Panc1 (cell line): ENCODE measurements at regions of chr19 and their contacts with region 1.

Region 1: DNA sequence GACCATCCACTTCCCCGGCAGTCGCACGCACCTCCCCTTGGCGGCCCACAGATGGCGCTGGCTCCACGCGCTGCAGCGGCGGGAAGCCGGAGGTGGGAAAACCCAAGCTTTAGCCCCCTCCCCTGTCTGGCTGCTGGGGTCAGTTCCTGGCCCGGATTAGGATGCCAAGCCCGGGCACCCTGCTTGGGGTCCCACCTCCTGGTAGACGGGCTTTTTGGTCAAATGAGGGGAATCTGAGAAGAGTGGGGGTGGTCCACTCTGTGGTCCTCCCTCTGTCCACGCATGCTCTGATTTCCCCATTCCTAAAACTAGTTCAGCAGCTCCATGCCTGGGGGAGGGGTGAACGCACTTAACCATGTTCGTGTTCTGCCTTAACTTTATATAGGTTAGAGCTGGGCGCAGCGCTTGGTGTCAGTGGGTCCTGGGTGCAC is 8.1 kb upstream of the ADGRE2 start:
- DNase-seq: no peak
- ATAC-seq: peak; percentile 79
- H3K4me3 ChIP-seq: 0 out of 4 replicates have a peak overlapping the region, but pooled peaks have one; percentile 4 to 6
- H3K27ac ChIP-seq: no peak overlapping the region
- H3K4me1 ChIP-seq: no peaks in the 10 kb centered on the region
- H3K27me3 ChIP-seq: no peaks in the 10 kb centered on the region
- CTCF ChIP-seq: peak; percentile 94

Region 2: GRCh38 chr19:14761612-14762011 is 24.8 kb before region 1 on chr19:
- CTCF ChIA-PET with region 1: no interaction called
- POLR2A ChIA-PET with region 1: no interaction called
- in situ Hi-C with region 1: no loop called
- intact Hi-C with region 1: no loop called
- DNase-seq: no peak
- ATAC-seq: no peak
- H3K4me3 ChIP-seq: no peak overlapping the region
- H3K27ac ChIP-seq: no peak overlapping the region
- H3K4me1 ChIP-seq: no peaks in the 10 kb centered on the region
- H3K27me3 ChIP-seq: no peaks in the 10 kb centered on the region; the same call in 1 of the 2 replicates
- CTCF ChIP-seq: no peak

Region 3: DNA sequence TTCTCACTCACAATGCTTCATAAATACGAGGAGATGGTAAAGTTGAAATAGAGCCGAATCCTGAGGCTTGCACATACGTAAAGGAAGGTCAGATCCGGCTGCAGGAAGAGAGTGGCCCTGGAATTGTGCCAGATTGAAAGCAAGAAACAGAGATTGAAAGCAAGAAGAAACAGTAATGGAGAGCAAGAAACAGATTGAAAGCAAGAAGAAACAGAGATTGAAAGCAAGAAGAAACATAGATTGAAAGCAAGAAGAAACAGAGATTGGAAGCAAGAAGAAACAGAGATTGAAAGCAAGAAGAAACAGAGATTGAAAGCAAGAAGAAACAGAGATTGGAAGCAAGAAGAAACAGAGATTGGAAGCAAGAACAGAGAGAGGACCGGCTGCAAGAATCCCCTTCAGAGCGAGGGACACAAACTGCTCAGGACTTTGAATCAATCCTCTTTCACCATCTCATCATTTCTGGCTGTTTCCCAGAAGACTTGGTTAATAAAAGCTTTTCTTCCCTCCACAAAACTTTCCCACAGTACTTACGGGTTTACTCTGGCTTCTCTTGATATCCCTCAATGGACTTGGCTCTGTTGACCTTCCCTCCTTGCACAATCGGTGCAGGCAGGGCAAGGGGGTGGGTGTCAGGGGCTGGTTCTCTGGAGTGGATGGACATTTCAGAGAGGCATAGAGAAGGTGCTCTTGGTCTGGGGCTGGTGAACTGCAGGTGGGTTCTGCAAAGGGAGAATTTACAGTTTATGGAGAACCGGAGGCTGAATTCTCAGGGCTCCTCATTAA is 23.0 kb after region 1 on chr19:
- CTCF ChIA-PET with region 1: no interaction called
- POLR2A ChIA-PET with region 1: no interaction called
- in situ Hi-C with region 1: no loop called
- intact Hi-C with region 1: no loop called
- DNase-seq: no peak
- ATAC-seq: no peak
- H3K4me3 ChIP-seq: no peak overlapping the region
- H3K27ac ChIP-seq: no peak overlapping the region
- H3K4me1 ChIP-seq: no peaks in the 10 kb centered on the region
- H3K27me3 ChIP-seq: no peaks in the 10 kb centered on the region
- CTCF ChIP-seq: no peak

Region 4: GRCh38 chr19:14835041-14835453 is 48.6 kb after region 1 on chr19 and contains the starts of genes OR7A5 and OR7C1:
- CTCF ChIA-PET with region 1: no interaction called
- POLR2A ChIA-PET with region 1: no interaction called
- in situ Hi-C with region 1: no loop called
- intact Hi-C with region 1: no loop called
- DNase-seq: no peak
- ATAC-seq: no peak
- H3K4me3 ChIP-seq: no peak within 1 kb of the TSS
- H3K27ac ChIP-seq: no peak within 1 kb of the TSS
- H3K4me1 ChIP-seq: no peaks in the 10 kb centered on the region
- H3K27me3 ChIP-seq: peaks cover 2% of the 10 kb centered on the region; the same call in 1 of the 2 replicates
- CTCF ChIP-seq: no peak
- total RNA-seq, gene OR7A5: not detected
- total RNA-seq, gene OR7C1: not detected

Region 5: GRCh38 chr19:14889994-14890642 is 103.7 kb after region 1 on chr19:
- CTCF ChIA-PET with region 1: no interaction called
- POLR2A ChIA-PET with region 1: no interaction called
- in situ Hi-C with region 1: no loop called
- intact Hi-C with region 1: loop called (anchors 5 kb)
- DNase-seq: no peak
- ATAC-seq: no peak
- H3K4me3 ChIP-seq: no peak overlapping the region
- H3K27ac ChIP-seq: no peak overlapping the region
- H3K4me1 ChIP-seq: no peaks in the 10 kb centered on the region
- H3K27me3 ChIP-seq: no peaks in the 10 kb centered on the region; the same call in 1 of the 2 replicates
- CTCF ChIP-seq: no peak

Region 6: DNA sequence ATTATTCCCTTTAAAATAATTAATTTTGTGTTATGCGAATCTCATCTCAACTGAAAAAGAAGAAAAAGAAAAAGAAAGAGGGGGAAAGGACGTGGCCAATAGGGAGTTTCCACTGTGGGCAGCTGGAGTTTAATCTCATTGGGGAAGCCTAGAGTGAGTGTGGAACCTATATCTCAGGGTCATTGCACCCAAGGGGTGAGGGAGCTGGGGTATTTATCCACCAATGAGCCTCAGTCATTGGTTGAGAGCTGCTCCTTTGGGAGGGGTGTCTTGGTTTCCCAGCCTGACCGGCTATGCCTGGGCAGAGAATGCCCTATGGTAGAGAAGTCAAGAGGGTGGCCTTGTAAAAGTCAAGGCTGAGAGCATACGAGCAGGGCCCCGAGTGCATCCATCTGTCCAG is 738.3 kb after region 1 on chr19:
- CTCF ChIA-PET with region 1: interaction called, 11 read pairs
- POLR2A ChIA-PET with region 1: no interaction called
- in situ Hi-C with region 1: no loop called
- intact Hi-C with region 1: no loop called
- DNase-seq: no peak
- ATAC-seq: no peak
- H3K4me3 ChIP-seq: no peak overlapping the region
- H3K27ac ChIP-seq: no peak overlapping the region
- H3K4me1 ChIP-seq: no peaks in the 10 kb centered on the region
- H3K27me3 ChIP-seq: no peaks in the 10 kb centered on the region
- CTCF ChIP-seq: no peak